CD8-positive, alpha-beta T cell (primary cell): ENCODE measurements at regions of chr20 and their contacts with region 1.

Region 1: DNA sequence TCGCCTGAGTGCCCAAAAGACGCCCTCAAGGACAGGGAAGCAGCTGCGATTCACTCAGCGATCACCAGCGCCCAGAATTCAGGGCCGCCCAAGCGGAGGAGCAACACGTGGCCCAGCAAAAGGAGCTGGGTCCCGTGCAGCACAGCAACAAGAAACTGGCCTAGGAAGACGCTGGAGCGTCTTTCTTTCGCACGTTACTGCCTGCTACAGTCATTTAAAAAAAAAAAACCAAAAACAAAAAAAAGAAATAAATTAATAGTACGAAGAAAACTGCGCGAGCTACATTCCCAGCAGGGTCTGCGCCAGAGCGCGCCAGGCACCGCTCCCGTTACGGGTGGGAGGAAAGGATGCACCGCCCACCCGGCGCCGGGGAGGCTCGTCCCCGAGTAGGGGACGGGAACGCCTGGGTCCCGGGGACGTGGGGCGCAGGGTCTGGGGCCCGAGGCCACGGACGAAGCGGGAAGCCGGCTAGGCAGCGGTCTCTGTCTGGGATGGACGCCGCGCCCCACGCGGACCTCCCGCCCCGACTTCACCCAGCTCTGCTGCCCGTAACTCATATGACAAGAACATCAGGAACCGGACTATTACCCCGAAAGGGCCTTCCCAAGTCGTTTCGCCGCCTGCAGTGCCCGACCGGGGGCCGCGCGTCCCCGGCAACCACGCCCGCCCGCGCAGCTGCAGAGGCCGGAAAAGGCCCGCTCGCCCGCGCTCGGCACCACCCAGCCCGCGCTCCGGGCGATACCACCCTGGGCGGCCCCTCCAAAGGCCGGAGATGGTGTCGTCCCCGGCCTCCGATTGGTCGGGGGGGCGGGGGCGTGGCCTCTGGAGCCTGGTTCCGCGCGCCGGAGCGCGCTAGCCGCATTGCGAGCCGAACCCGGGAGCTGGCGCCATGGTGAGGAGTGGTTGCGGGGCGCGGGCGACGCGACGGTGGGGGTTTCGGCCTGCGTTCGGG is at the start of gene NOP56:
- DNase-seq: peak; percentile 91 to 98 (median 95)
- ATAC-seq: peak; percentile 92
- H3K4me3 ChIP-seq: peak within 1 kb of the TSS; percentile 52 to 85
- H3K4me3 Mint-ChIP-seq: peak within 1 kb of the TSS; percentile 88
- H3K27ac ChIP-seq: peak within 1 kb of the TSS; percentile 77 to 86
- H3K27ac Mint-ChIP-seq: peak within 1 kb of the TSS; percentile 87
- H3K4me1 ChIP-seq: peaks cover 20% of the 10 kb centered on the region
- H3K4me1 Mint-ChIP-seq: peaks cover 44% of the 10 kb centered on the region
- H3K27me3 ChIP-seq: no peaks in the 10 kb centered on the region
- H3K27me3 Mint-ChIP-seq: no peaks in the 10 kb centered on the region
- CTCF ChIP-seq: no peak
- total RNA-seq, gene NOP56: 311 to 317 TPM

Region 2: DNA sequence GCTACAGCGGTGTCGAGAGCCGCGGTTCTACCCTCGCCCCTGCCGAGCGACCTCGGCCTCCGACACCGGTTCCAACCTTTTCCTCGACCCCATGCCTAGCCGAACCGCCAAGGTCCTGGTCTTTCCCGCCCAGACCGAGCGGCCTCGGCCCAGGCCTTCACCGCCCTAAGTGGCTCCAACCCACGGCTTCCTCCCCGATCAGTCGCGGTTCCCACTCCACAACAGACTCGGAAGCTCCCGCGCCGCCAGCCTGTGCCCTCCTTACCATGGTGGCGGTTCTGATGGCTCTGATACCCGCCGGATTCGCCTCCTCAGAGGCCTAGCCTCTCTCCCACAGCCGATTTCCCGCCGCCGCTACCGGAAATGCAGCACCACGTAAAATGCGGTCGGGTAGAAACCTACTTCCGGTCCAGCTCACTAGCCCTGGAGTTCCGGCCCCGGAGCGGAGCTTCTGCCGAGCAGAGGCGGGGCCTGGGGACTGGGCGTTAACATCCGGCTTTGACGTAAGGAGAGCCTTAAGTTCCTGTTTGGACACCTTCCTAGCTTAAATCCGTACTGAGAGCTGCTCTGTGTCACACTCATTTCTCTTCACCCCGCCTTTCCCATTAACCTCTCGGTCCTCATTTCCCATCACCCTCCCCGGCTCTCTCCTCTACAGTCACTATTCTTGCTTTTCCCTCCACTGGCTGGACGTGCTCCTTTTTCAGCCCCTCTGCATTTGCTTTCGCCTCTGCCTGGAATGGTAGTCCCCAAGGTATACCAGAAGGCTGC is 181.4 kb before region 1 on chr20 and contains the start of gene SNRPB:
- CTCF ChIA-PET with region 1: no interaction called
- POLR2A ChIA-PET with region 1: interaction called, 17 read pairs
- intact Hi-C with region 1: loop called (anchors 2 kb)
- DNase-seq: peak; percentile 93 to 99 (median 97)
- ATAC-seq: peak; percentile 93
- H3K4me3 ChIP-seq: peak within 1 kb of the TSS; percentile 76 to 99
- H3K4me3 Mint-ChIP-seq: peak within 1 kb of the TSS; percentile 99
- H3K27ac ChIP-seq: peak within 1 kb of the TSS; percentile 95 to 99
- H3K27ac Mint-ChIP-seq: peak within 1 kb of the TSS; percentile 98
- H3K4me1 ChIP-seq: peaks cover 21% of the 10 kb centered on the region
- H3K4me1 Mint-ChIP-seq: peaks cover 44% of the 10 kb centered on the region
- H3K27me3 ChIP-seq: no peaks in the 10 kb centered on the region
- H3K27me3 Mint-ChIP-seq: no peaks in the 10 kb centered on the region
- CTCF ChIP-seq: no peak
- total RNA-seq, gene SNRPB: 176 to 180 TPM

Region 3: DNA sequence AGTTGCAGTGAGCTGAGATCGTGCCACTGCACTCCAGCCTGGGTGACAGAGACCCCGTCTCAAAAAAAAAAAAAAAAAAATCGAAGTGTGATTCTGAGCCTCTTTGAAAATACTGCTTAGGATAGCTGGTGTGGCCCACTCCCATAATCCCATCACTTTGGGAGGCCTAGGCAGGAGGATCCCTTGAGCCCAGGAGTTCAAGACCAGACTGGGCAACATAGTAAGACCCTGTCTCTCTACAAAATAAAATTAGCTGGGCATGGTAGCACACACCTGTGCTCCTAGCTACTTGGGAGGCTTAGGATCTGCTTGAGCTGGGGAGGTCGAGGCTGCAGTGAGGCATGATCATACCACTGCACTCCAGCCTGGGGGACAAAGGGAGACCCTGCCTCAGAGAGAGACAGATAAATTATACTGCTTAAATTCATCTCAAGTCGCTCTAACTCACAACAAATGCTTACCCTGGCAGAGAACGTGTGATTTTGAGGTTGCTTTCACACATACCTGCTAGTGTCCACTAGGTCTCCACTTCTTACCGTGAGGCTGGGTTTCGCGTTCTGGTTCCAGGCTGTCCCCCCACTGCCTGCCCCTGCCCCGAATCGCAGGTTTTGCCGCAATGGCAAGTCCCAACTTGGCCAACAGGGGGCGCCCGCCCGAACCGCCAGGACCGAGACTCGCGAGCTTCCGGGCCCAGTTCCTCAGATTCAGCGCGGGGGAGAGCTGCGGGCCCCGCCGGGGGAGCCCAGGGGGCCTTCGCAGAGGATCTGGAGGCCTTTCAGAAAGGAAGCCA is 127.9 kb before region 1 on chr20:
- CTCF ChIA-PET with region 1: interaction called, 6 read pairs
- POLR2A ChIA-PET with region 1: interaction called, 3 read pairs
- intact Hi-C with region 1: loop called (anchors 1 to 5 kb)
- DNase-seq: peak; percentile 86 to 97 (median 91)
- ATAC-seq: peak; percentile 84
- H3K4me3 ChIP-seq: peak overlapping the region; percentile 90 to 91
- H3K4me3 Mint-ChIP-seq: peak overlapping the region; percentile 89
- H3K27ac ChIP-seq: peak overlapping the region; percentile 47 to 58
- H3K27ac Mint-ChIP-seq: peak overlapping the region; percentile 60
- H3K4me1 ChIP-seq: peaks cover 10% of the 10 kb centered on the region
- H3K4me1 Mint-ChIP-seq: peaks cover 12% of the 10 kb centered on the region
- H3K27me3 ChIP-seq: no peaks in the 10 kb centered on the region
- H3K27me3 Mint-ChIP-seq: no peaks in the 10 kb centered on the region
- CTCF ChIP-seq: peak; percentile 92

Region 4: DNA sequence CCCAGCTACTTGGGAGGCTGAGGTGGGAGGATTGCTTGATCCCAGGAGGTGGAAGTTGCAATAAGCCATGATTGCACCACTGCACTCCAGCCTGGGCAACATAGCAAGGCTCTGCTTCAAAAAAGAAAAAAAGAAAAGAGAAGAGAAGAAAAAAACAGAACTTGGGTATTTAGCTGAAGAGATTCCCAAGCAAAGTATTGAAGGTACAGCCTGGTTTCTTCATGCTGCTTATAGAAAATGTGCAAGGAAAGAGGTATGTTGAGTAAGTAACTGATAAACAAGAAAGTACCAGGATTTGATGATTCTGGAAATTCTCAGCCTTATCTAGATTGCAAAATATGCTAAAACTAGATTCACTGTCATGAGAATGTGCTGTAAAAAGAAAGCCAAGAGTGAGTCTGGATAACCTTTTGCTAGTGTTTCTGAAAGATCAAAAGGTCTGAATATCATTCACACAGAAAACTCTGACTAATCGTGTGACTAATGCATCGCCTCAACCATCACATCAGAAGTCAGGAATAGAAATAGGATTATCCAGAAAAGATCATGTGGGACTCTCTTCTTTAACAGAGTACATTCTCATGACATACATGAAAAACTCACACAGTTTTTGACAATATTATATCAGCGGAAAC is 32.0 kb before region 1 on chr20:
- CTCF ChIA-PET with region 1: no interaction called
- POLR2A ChIA-PET with region 1: no interaction called
- intact Hi-C with region 1: no loop called
- DNase-seq: no peak
- ATAC-seq: no peak
- H3K4me3 ChIP-seq: no peak overlapping the region
- H3K4me3 Mint-ChIP-seq: no peak overlapping the region
- H3K27ac ChIP-seq: no peak overlapping the region
- H3K27ac Mint-ChIP-seq: no peak overlapping the region
- H3K4me1 ChIP-seq: no peaks in the 10 kb centered on the region
- H3K4me1 Mint-ChIP-seq: no peaks in the 10 kb centered on the region
- H3K27me3 ChIP-seq: peaks cover 0 to 3% of the 10 kb centered on the region in 2 experiments
- H3K27me3 Mint-ChIP-seq: peaks cover 40% of the 10 kb centered on the region
- CTCF ChIP-seq: no peak

Region 5: DNA sequence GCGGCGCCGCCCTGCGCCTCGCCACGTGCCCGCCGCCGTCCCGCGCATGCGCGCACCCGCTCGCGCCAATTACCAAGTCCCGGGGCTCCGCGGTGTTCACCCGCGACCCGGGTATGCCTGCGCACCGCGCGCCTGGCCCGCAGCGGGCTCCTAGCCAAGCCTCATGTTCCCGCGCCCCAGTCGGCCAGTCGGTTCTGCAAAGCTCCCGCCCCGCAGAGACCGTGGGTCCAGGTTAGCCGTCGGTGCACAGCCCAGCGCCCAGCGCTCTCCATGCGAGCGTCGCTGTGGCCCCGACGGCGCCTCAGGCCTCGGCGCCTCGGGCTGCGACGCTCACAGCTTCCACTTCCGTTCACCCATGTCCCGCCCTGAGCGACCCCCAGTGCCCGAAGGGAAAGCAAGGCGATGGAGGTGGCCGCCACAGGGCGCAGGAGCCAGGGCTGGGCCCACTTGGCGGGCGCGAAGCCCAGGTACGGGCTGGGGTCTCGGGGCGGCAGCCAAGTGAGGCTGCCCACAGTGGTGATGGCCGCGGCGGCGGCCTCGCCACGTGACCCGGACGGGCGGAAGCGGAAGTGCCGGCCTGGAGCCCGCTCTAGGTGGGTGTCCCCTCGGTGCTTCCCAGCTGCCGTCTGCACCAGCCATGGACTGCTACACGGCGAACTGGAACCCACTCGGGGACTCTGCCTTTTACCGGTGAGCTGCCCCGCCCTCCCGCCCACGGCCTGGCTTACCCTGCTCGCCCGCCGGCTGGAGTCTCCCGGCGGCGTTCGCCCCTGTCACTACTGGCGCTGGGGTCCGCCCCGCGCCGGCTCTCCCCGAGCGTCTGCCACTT is 188.3 kb after region 1 on chr20 and contains the starts of genes PCED1A and VPS16:
- CTCF ChIA-PET with region 1: no interaction called
- POLR2A ChIA-PET with region 1: interaction called, 15 read pairs
- intact Hi-C with region 1: no loop called
- DNase-seq: peak; percentile 78 to 95 (median 89)
- ATAC-seq: peak; percentile 92
- H3K4me3 ChIP-seq: peak within 1 kb of the TSS; percentile 88 to 97
- H3K4me3 Mint-ChIP-seq: peak within 1 kb of the TSS; percentile 82
- H3K27ac ChIP-seq: peak within 1 kb of the TSS; percentile 85 to 88
- H3K27ac Mint-ChIP-seq: peak within 1 kb of the TSS; percentile 89
- H3K4me1 ChIP-seq: peaks cover 22% of the 10 kb centered on the region
- H3K4me1 Mint-ChIP-seq: peaks cover 41% of the 10 kb centered on the region
- H3K27me3 ChIP-seq: no peaks in the 10 kb centered on the region
- H3K27me3 Mint-ChIP-seq: no peaks in the 10 kb centered on the region
- CTCF ChIP-seq: no peak
- total RNA-seq, gene PCED1A: 58.7 to 62.2 TPM
- total RNA-seq, gene VPS16: 40.7 to 41.1 TPM

Region 6: DNA sequence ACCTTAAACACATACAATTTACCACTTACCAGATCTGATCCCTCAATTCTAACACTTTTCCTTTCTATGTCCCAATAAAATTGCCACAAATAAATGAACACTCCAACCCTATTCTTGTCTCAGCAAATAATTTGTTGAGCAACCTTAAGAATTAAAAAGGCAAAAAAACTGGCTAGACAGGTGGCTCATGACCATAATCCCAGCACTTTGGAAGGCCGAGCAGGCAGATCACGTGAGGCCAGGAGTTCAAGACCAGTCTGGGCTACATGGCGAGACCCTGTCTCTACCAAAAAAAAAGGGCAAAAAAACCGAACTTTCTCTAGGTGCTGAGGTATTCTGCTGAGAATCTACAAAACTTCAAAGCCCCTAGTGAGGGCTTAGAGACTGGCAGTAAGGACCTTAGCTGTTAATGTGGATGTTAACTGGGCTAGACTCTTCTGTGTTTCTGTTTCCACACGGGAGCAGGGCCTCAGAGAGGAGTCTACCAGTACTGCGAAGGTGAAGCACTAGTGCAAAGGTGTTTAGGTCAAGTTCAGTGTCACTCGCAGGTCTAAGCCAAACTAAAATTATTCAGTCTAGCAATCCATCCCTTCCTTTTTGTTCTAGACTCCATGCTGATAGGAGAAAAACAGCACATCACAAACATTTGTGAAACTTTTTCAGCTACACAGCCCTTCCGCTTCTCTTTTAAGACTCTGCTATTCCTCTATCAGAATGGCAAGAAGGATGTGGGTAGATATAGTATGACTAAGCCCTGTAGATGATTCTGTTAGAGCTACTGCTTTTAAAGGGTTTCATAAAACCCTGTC is 505.0 kb after region 1 on chr20:
- CTCF ChIA-PET with region 1: no interaction called
- POLR2A ChIA-PET with region 1: no interaction called
- intact Hi-C with region 1: loop called (anchors 5 kb)
- DNase-seq: peak in 1 of 9 experiments; percentile 60
- ATAC-seq: peak; percentile 80
- H3K4me3 ChIP-seq: peak overlapping the region in 1 of 2 experiments; percentile 12
- H3K4me3 Mint-ChIP-seq: peak overlapping the region; percentile 60
- H3K27ac ChIP-seq: peak overlapping the region in 1 of 2 experiments; percentile 58
- H3K27ac Mint-ChIP-seq: peak overlapping the region; percentile 90
- H3K4me1 ChIP-seq: peaks cover 43% of the 10 kb centered on the region
- H3K4me1 Mint-ChIP-seq: peaks cover 60% of the 10 kb centered on the region
- H3K27me3 ChIP-seq: no peaks in the 10 kb centered on the region
- H3K27me3 Mint-ChIP-seq: no peaks in the 10 kb centered on the region
- CTCF ChIP-seq: no peak